AG04450 (cell line): ENCODE measurements at regions of chr2 and their contacts with region 1.

Region 1: GRCh38 chr2:226799181-226799975 is at the start of gene IRS1:
- DNase-seq: no peak
- H3K4me3 ChIP-seq: peak within 1 kb of the TSS; percentile 91
- H3K27ac ChIP-seq: peak within 1 kb of the TSS; percentile 89
- H3K27me3 ChIP-seq: no peaks in the 10 kb centered on the region
- CTCF ChIP-seq: 0 out of 2 replicates have a peak, but pooled peaks have one; percentile 22
- polyA plus RNA-seq, gene IRS1: 32.9 and 36.6 TPM in 2 replicates

Region 2: GRCh38 chr2:225889446-225889850 is 909.9 kb before region 1 on chr2:
- CTCF ChIA-PET with region 1: interaction called, 21 read pairs
- POLR2A ChIA-PET with region 1: no interaction called
- DNase-seq: peak; percentile 74
- H3K4me3 ChIP-seq: no peak overlapping the region
- H3K27ac ChIP-seq: no peak overlapping the region
- H3K27me3 ChIP-seq: no peaks in the 10 kb centered on the region
- CTCF ChIP-seq: peak; percentile 85

Region 3: GRCh38 chr2:226638576-226638975 is 160.8 kb before region 1 on chr2:
- CTCF ChIA-PET with region 1: no interaction called
- POLR2A ChIA-PET with region 1: no interaction called
- DNase-seq: peak; percentile 62
- H3K4me3 ChIP-seq: no peak overlapping the region
- H3K27ac ChIP-seq: peak overlapping the region; percentile 53
- H3K27me3 ChIP-seq: no peaks in the 10 kb centered on the region
- CTCF ChIP-seq: no peak

Region 4: GRCh38 chr2:226818930-226819329 is 19.6 kb after region 1 on chr2:
- CTCF ChIA-PET with region 1: interaction called, 16 read pairs
- POLR2A ChIA-PET with region 1: no interaction called
- DNase-seq: no peak
- H3K4me3 ChIP-seq: no peak overlapping the region
- H3K27ac ChIP-seq: no peak overlapping the region
- H3K27me3 ChIP-seq: no peaks in the 10 kb centered on the region
- CTCF ChIP-seq: no peak

Region 5: DNA sequence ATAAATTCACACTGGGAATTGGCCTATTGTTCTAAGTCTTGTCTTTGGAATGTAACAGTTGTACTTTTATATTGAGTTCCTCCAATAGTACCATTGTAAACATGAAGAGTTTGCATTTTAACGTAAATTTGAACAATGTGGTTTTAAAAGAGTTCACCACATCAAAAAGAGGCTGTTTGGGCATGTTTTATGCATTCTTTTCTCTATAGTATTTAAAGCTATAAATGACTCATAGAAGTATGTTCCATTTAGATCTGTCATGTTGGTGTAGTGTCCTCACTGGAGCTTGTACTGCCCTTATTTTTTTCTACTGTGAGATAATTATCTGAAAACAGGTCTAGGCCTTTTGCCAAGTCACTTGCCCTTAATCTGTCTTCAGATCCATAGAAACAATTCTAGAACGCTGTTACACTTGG is 178.4 kb after region 1 on chr2:
- CTCF ChIA-PET with region 1: interaction called, 105 read pairs
- POLR2A ChIA-PET with region 1: no interaction called
- DNase-seq: peak; percentile 23
- H3K4me3 ChIP-seq: no peak overlapping the region
- H3K27ac ChIP-seq: no peak overlapping the region
- H3K27me3 ChIP-seq: no peaks in the 10 kb centered on the region
- CTCF ChIP-seq: no peak